MCF 10A (cell line): ENCODE measurements at regions of chr18 and their contacts with region 1.

Region 1: DNA sequence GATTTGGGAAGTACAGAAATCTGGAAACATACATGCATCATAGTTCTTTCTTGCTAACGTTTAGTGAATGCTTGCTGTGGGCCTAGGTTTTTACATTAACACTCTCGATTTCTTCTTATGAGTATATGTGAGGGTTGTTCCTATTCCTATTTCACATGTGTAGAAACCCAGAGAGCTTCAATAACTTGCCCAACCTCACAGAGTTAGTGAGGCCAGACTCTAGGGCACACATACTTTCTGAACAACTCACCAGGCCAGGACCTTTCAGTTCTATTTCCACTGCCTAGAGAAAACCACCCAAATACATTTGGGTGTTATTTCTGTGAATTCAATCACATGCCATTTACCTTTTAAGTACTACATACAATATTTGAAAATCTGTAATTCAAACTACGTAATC is 8.2 kb upstream of the KCTD1 start:
- DNase-seq: no peak
- H3K4me3 Mint-ChIP-seq: no peak overlapping the region
- H3K27ac Mint-ChIP-seq: no peak overlapping the region
- H3K4me1 Mint-ChIP-seq: peaks cover 25% of the 10 kb centered on the region
- H3K27me3 Mint-ChIP-seq: no peaks in the 10 kb centered on the region
- CTCF ChIP-seq: no peak

Region 2: GRCh38 chr18:26215247-26215970 is 341.2 kb before region 1 on chr18:
- CTCF ChIA-PET with region 1: no interaction called
- POLR2A ChIA-PET with region 1: no interaction called
- intact Hi-C with region 1: no loop called
- DNase-seq: no peak
- H3K4me3 Mint-ChIP-seq: no peak overlapping the region
- H3K27ac Mint-ChIP-seq: no peak overlapping the region
- H3K4me1 Mint-ChIP-seq: no peaks in the 10 kb centered on the region
- H3K27me3 Mint-ChIP-seq: no peaks in the 10 kb centered on the region
- CTCF ChIP-seq: no peak

Region 3: GRCh38 chr18:26327062-26327461 is 229.5 kb before region 1 on chr18:
- CTCF ChIA-PET with region 1: no interaction called
- POLR2A ChIA-PET with region 1: no interaction called
- intact Hi-C with region 1: loop called (anchors 5 kb)
- DNase-seq: peak; percentile 21
- H3K4me3 Mint-ChIP-seq: no peak overlapping the region
- H3K27ac Mint-ChIP-seq: peak overlapping the region; percentile 81
- H3K4me1 Mint-ChIP-seq: peaks cover 15% of the 10 kb centered on the region
- H3K27me3 Mint-ChIP-seq: no peaks in the 10 kb centered on the region
- CTCF ChIP-seq: no peak

Region 4: GRCh38 chr18:26342648-26343047 is 213.9 kb before region 1 on chr18:
- CTCF ChIA-PET with region 1: no interaction called
- POLR2A ChIA-PET with region 1: no interaction called
- intact Hi-C with region 1: no loop called
- DNase-seq: no peak
- H3K4me3 Mint-ChIP-seq: no peak overlapping the region
- H3K27ac Mint-ChIP-seq: no peak overlapping the region
- H3K4me1 Mint-ChIP-seq: no peaks in the 10 kb centered on the region
- H3K27me3 Mint-ChIP-seq: no peaks in the 10 kb centered on the region
- CTCF ChIP-seq: no peak